Panc1 (cell line): ENCODE measurements at regions of chr1 and their contacts with region 1.

Region 1: GRCh38 chr1:206556750-206557635 is 49.7 kb downstream of the RASSF5 start:
- DNase-seq: no peak
- ATAC-seq: peak; percentile 77
- H3K4me3 ChIP-seq: peak overlapping the region; percentile 45
- H3K27ac ChIP-seq: no peak overlapping the region
- H3K4me1 ChIP-seq: peaks cover 4% of the 10 kb centered on the region; the same call in 1 of the 2 replicates
- H3K27me3 ChIP-seq: peaks cover 4% of the 10 kb centered on the region; the same call in 1 of the 2 replicates
- CTCF ChIP-seq: no peak

Region 2: DNA sequence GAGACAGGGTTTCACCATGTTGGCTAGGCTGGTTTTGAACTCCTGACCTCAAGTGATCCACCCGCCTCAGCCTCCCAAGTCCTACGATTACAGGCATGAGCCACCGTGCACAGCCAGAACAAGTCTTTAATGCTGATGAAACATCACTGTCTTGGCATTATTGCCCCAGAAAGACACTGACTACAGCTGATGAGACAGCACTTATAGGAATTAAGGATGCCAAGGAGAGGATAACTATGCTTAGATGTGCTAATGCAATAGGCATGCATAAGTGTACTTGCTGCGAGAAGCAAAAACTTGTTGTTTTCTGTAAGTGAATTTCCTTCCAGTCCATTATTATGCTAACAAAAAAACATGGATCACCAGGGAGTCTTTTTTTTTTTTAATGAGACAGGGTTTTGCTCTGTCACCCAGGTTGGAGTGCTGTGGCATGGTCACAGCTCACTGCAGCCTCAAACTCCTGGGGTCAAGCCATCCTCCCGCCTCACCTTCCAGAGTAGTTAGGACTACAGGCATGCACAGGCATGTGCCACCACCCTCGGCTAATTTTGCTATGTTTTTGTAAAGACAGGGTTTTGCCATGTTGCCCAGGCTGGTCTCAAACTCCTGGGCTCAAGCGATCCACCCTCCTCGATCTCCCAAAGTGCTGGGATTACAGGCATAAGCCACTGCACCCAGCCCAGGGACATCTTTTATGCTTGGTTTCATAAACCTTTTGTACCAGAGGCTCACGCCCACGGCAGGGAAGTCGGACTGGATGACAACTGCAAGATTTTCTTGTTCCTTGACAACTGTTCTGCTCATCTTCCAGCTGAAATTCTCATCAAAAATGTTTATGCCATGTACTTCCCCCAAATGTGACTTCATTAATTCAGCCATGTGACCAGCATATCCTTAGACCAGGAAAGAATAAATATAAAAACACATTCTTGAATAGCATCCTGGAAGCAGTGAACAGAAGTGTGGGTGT is 480.9 kb before region 1 on chr1:
- CTCF ChIA-PET with region 1: no interaction called
- POLR2A ChIA-PET with region 1: interaction called, 14 read pairs
- in situ Hi-C with region 1: no loop called
- intact Hi-C with region 1: no loop called
- DNase-seq: no peak
- ATAC-seq: no peak
- H3K4me3 ChIP-seq: no peak overlapping the region
- H3K27ac ChIP-seq: no peak overlapping the region
- H3K4me1 ChIP-seq: no peaks in the 10 kb centered on the region
- H3K27me3 ChIP-seq: 0 out of 2 replicates have a peak, but pooled peaks cover 3% of the 10 kb centered on the region
- CTCF ChIP-seq: no peak

Region 3: DNA sequence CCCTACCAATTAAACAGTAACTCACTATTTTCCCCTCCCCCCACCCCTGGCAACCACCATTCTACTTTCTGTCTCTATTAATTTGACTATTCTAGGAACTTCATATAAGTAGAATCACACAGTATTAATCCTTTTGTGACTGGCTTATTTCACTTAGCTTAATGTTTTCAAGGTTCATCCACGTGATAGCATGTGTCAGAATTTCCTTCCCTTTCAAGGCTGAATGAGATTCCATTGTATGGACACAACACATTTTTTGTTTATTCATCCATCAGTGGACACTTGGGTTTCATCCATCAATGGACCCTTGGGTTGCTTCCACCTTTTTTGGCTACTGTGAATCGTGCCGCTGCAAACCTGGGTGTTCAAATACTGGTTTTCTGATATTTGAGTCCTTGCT is 13.5 kb after region 1 on chr1:
- CTCF ChIA-PET with region 1: no interaction called
- POLR2A ChIA-PET with region 1: interaction called, 11 read pairs
- in situ Hi-C with region 1: no loop called
- intact Hi-C with region 1: no loop called
- DNase-seq: no peak
- ATAC-seq: no peak
- H3K4me3 ChIP-seq: no peak overlapping the region
- H3K27ac ChIP-seq: no peak overlapping the region
- H3K4me1 ChIP-seq: no peaks in the 10 kb centered on the region
- H3K27me3 ChIP-seq: no peaks in the 10 kb centered on the region
- CTCF ChIP-seq: no peak

Region 4: GRCh38 chr1:206636671-206637070 is 79.7 kb after region 1 on chr1:
- CTCF ChIA-PET with region 1: no interaction called
- POLR2A ChIA-PET with region 1: no interaction called
- in situ Hi-C with region 1: no loop called
- intact Hi-C with region 1: no loop called
- DNase-seq: no peak
- ATAC-seq: no peak
- H3K4me3 ChIP-seq: peak overlapping the region; percentile 13 to 93; a peak in 3 of 4 replicates
- H3K27ac ChIP-seq: peak overlapping the region; percentile 45; the same call in 1 of the 2 replicates
- H3K4me1 ChIP-seq: peaks cover 15% of the 10 kb centered on the region
- H3K27me3 ChIP-seq: no peaks in the 10 kb centered on the region
- CTCF ChIP-seq: no peak